Right ventricle myocardium inferior (tissue), 1 donor: ENCODE measurements at regions of chr2 and their contacts with region 1.

Region 1: DNA sequence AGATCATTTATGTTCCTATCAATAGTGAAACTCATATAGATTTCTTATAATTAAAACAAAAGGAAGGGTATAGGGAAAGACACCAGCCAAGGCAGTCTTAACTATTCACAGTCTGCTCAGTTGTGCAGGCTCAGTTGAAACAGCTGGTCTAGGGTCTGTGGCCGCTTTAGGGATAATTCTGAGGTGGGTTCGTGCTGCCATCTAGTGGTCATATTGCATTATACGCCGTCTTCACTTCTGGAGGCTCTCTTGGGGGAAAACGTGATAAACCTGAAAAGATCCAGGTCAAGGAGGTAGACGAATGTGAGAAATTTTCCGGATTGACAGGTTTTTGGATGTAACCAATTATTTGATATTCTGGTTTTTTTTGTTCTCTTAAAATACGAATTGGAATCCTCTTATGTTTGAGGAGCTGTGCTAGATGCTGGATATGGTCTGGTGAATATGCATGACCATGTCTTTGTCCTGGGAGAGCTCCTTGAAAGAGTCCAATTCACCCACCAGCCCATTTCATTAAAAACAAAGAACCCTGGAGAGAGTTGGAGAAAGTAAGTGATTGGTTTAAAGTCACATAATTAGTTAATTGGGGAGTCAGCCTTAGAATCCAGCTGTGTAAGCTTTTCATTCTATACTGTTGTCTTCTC is 492.4 kb downstream of the PLCL1 start:
- DNase-seq: no peak
- ATAC-seq: peak; percentile 51

Region 2: DNA sequence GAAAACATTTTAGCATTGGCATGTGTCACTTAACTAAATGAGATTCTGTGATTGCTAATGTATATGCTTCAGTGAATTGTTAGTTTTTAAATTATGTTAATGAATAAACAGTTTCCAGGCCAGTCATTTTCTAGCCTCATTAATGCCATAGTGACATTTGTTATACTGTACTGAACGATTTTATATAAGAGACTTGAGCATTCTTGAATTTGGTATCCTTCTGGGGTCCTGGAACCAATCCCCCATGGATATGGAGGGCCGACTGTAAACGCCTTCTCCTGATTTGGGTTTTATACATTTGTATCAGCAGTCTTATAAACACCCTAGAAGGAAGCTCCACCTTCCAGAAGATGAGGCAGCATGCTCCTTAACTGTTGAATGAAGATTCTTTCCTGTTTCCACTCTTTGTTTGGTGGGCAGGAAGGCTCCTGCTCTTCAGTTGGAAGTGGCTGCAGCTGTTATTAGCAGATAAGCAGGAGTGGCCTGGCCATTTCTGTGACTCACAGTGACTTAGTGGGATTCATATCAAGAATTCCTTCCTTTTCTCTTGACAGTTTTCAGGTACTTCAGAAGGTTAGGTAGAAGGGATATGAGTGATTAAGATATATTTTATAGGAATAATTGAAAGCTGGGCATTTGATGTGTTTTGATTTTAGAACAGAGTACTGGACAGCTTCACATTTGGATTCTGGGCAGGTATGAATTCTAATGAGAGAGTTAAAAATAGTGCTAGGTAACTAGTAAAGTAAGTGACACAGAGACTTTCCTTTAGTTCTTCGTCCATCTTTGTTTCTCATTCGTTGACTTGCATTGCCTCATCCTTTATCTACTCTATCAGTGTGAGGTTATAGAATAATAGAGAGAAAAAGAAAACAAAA is 367.5 kb before region 1 on chr2:
- intact Hi-C with region 1: no loop called
- DNase-seq: no peak
- ATAC-seq: peak; percentile 30

Region 3: GRCh38 chr2:198127627-198128026 is 169.2 kb before region 1 on chr2:
- intact Hi-C with region 1: loop called (anchors 10 kb)
- DNase-seq: no peak
- ATAC-seq: peak; percentile 71

Region 4: DNA sequence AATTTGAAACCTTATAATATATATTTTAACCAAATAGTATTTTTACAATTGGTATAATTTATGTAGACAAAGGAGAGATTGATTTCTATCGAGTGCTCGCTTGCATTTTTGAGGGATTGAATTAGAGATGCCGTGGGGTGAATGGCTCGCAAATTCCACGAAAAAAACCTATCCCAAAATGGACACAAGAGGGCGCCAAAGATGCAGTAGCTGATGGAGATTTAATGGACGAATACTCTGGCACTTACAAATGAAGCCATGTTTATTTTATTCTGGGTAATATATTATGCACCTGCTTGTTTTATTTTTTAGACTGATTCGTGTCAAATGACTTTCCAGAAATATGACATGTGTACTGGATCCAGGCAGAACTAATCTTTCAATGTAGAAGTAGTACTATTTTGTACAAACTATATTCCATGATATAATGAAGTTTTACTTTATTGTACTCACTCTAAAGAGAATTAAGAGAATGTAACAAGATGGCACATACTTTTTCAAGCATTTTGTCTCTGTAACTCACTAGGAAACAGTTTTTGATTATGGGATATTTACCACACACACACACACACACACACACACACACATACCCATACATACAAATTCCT is 13.0 kb after region 1 on chr2:
- intact Hi-C with region 1: no loop called
- DNase-seq: no peak
- ATAC-seq: no peak